HepG2 (cell line): ENCODE measurements at regions of chr22 and their contacts with region 1.

Region 1: GRCh38 chr22:18970176-18970947 is 34.3 kb upstream of the PRODH start:
- DNase-seq: no peak
- ATAC-seq: peak; percentile 56
- H3K4me3 ChIP-seq: peak overlapping the region; percentile 53 to 71 (median 59)
- H3K27ac ChIP-seq: no peak overlapping the region
- H3K4me1 ChIP-seq: peaks cover 16% of the 10 kb centered on the region
- H3K27me3 ChIP-seq: peaks cover 1 to 15% of the 10 kb centered on the region in 2 experiments; a peak in 3 of 5 replicates
- CTCF ChIP-seq: peak; percentile 2; the same call in 1 of the 2 replicates
- EP300 ChIP-seq: no peak
- POLR2A ChIP-seq: no peak
- RAD21 ChIP-seq: no peak

Region 2: GRCh38 chr22:20298803-20299735 is 1328.7 kb after region 1 on chr22:
- CTCF ChIA-PET with region 1: no interaction called
- POLR2A ChIA-PET with region 1: no interaction called
- in situ Hi-C with region 1: loop called (anchors 25 kb)
- intact Hi-C with region 1: no loop called
- DNase-seq: peak; percentile 20
- ATAC-seq: peak; percentile 74
- H3K4me3 ChIP-seq: peak overlapping the region; percentile 21 to 66 (median 35); a peak in 3 of 6 replicates
- H3K27ac ChIP-seq: no peak overlapping the region
- H3K4me1 ChIP-seq: no peaks in the 10 kb centered on the region
- H3K27me3 ChIP-seq: peaks cover 4 to 67% of the 10 kb centered on the region in 2 experiments
- CTCF ChIP-seq: no peak
- EP300 ChIP-seq: no peak
- POLR2A ChIP-seq: no peak
- RAD21 ChIP-seq: no peak